RWPE1 (cell line): ENCODE measurements at regions of chr3 and their contacts with region 1.

Region 1: DNA sequence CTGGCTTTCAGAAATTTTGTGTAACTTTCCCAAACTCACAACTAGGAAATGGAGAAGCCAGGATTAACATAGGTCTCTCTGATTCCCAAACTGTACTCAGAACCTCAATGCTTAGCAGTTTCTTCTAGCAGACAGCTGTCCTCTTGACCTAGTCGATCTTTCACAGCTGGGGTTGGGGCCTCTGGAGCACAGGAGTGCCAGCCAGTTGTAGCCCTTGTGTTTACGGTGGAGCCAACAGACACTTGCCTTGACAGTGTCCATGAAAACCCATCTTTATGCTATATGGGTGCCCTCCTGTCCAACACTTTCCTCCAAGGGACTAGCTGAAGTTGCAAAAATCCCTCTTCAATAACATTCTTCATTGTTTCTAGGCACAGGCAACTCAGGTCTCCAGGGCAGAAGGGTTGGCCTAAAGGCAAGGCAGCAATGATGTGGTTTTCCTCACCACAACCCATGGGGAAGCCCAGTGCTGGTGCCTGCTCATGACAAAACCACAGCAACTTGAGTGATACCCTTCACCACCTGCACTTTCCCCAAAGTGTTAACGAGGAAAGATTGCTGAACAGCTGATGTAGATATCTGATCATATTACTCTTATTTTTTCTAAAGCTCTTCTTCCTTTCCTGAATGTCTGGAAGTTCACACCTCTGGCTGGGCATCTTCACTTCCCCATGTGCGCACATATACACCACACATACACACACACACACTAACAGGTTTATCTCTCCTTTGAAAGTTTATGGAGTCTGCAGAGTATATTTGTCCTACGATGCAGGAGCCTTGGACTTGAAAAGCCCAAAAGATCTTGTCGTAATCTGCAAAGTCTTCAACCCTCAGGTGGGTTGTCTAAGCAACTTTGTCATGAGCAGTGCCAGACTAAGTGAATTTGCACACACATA is 11.0 kb upstream of the KNG1 start:
- DNase-seq: no peak
- H3K27ac ChIP-seq: no peak overlapping the region
- CTCF ChIP-seq: no peak

Region 2: GRCh38 chr3:186361762-186362536 is 344.2 kb before region 1 on chr3 and contains the start of gene DGKG:
- CTCF ChIA-PET with region 1: interaction called, 10 read pairs
- POLR2A ChIA-PET with region 1: no interaction called
- DNase-seq: peak; percentile 42
- H3K27ac ChIP-seq: no peak within 1 kb of the TSS
- CTCF ChIP-seq: no peak

Region 3: DNA sequence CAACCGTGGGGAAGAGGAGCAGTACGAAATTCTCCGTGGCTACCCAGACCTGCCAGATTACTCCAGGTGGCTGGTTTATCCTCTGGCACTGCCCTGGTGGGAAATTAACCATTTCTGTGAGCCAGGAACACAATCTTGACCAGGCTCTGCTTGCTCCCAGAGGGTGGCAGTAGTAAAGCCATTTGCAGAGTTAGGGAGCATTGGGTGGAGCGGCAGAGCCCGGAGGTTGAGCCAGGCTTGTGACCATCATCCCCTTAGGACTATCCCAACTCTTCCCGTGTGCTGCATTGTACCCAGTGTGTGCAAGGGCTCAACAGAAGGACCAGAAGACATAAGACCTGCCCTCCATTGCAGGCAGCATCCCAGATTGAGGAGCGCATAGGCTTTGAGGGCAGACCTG is 16.3 kb after region 1 on chr3:
- CTCF ChIA-PET with region 1: no interaction called
- POLR2A ChIA-PET with region 1: no interaction called
- DNase-seq: no peak
- H3K27ac ChIP-seq: no peak overlapping the region
- CTCF ChIP-seq: no peak